Activated CD8-positive, alpha-beta T cell treated with anti-CD3 and anti-CD28 coated beads for 36 hours (primary cell): ENCODE measurements at regions of chr2 and their contacts with region 1.

Region 1: DNA sequence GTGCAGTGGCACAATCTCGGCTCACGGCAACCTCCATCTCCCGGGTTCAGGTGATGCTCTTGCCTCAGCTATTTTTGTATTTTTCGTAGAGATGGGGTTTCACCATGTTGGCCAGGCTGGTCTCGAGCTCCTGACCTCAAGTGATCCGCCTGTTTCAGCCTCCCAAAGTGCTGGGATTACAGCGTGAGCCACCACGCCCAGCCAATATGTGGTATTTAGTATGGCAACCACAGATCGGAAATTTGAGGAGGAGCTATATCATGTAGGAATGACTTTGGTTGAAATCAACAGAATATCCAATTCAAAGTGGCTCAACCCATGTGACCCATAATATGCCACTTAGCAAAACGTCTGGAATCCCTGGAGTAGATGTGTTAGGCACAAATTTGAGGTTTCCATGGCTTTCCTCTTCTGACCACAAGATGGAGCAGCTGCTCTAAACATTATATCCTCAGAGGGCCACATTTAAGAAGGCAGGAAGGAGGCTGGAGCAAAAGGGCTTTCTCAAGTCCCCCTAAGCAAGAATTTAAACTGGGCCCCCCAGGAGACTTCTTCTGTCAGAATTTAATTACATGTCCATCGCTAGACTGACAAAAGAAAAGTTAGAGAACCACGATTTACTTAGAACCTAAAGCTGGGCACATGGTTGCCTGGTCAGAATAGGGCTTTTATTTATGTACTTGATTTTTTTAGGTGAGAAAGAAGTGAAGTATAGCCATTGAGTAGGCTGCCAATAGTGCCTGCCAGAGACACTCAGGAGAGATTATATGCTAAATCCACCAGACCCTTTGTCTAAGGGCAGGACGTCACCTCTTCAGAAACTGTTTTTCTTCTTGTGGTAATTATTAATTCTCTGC is 49.6 kb upstream of the ITSN2 start:
- DNase-seq: peak; percentile 48
- ATAC-seq: peak; percentile 87
- H3K4me3 Mint-ChIP-seq: no peak overlapping the region
- H3K27ac Mint-ChIP-seq: no peak overlapping the region
- H3K4me1 Mint-ChIP-seq: no peaks in the 10 kb centered on the region
- H3K27me3 Mint-ChIP-seq: peaks cover 9% of the 10 kb centered on the region
- CTCF ChIP-seq: peak; percentile 90

Region 2: GRCh38 chr2:24421668-24422067 is 11.7 kb after region 1 on chr2:
- CTCF ChIA-PET with region 1: interaction called, 42 read pairs
- POLR2A ChIA-PET with region 1: no interaction called
- intact Hi-C with region 1: no loop called
- DNase-seq: peak; percentile 85
- ATAC-seq: peak; percentile 69
- H3K4me3 Mint-ChIP-seq: no peak overlapping the region
- H3K27ac Mint-ChIP-seq: no peak overlapping the region
- H3K4me1 Mint-ChIP-seq: no peaks in the 10 kb centered on the region
- H3K27me3 Mint-ChIP-seq: peaks cover 1% of the 10 kb centered on the region
- CTCF ChIP-seq: peak; percentile 74

Region 3: DNA sequence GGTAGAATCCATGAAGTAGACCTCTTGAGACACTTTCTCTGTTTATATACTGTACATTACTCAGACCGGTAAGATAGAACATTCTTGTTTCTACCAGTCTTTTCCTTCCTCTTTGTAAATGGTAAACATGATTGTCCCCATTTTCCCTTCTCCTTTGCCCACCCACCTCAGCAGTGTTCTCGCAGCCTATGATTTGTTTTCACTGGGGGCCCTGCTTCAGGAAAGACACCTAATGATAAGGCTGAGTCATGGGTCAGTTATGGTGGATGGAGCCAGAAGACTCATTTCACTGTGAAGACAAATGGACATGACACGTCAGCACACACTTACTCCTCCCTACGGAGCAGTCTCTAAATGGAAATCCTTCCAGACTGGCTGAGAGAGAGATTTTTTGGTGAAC is 407.0 kb after region 1 on chr2:
- CTCF ChIA-PET with region 1: interaction called, 11 read pairs
- POLR2A ChIA-PET with region 1: no interaction called
- intact Hi-C with region 1: no loop called
- DNase-seq: no peak
- ATAC-seq: no peak
- H3K4me3 Mint-ChIP-seq: no peak overlapping the region
- H3K27ac Mint-ChIP-seq: no peak overlapping the region
- H3K4me1 Mint-ChIP-seq: no peaks in the 10 kb centered on the region
- H3K27me3 Mint-ChIP-seq: no peaks in the 10 kb centered on the region
- CTCF ChIP-seq: no peak

Region 4: GRCh38 chr2:24827321-24828237 is 417.7 kb after region 1 on chr2:
- CTCF ChIA-PET with region 1: interaction called, 94 read pairs
- POLR2A ChIA-PET with region 1: no interaction called
- intact Hi-C with region 1: loop called (anchors 2 kb)
- DNase-seq: peak; percentile 85
- ATAC-seq: peak; percentile 86
- H3K4me3 Mint-ChIP-seq: no peak overlapping the region
- H3K27ac Mint-ChIP-seq: peak overlapping the region; percentile 43
- H3K4me1 Mint-ChIP-seq: peaks cover 18% of the 10 kb centered on the region
- H3K27me3 Mint-ChIP-seq: no peaks in the 10 kb centered on the region
- CTCF ChIP-seq: peak; percentile 84

Region 5: GRCh38 chr2:25131567-25132298 is 721.8 kb after region 1 on chr2:
- CTCF ChIA-PET with region 1: interaction called, 14 read pairs
- POLR2A ChIA-PET with region 1: no interaction called
- intact Hi-C with region 1: no loop called
- DNase-seq: peak; percentile 16
- ATAC-seq: peak; percentile 32
- H3K4me3 Mint-ChIP-seq: peak overlapping the region; percentile 45
- H3K27ac Mint-ChIP-seq: no peak overlapping the region
- H3K4me1 Mint-ChIP-seq: peaks cover 3% of the 10 kb centered on the region
- H3K27me3 Mint-ChIP-seq: peaks cover 41% of the 10 kb centered on the region
- CTCF ChIP-seq: no peak